HCT116 (cell line): ENCODE measurements at regions of chr12 and their contacts with region 1.

Region 1: GRCh38 chr12:131564845-131565244 is 146.0 kb upstream of the SFSWAP start:
- DNase-seq: no peak
- ATAC-seq: no peak
- H3K4me3 ChIP-seq: no peak overlapping the region
- H3K27ac ChIP-seq: no peak overlapping the region
- H3K4me1 ChIP-seq: no peaks in the 10 kb centered on the region
- H3K27me3 ChIP-seq: peaks cover 10% of the 10 kb centered on the region; the same call in 1 of the 2 replicates
- CTCF ChIP-seq: no peak
- POLR2A ChIP-seq: no peak
- RAD21 ChIP-seq: no peak

Region 2: GRCh38 chr12:131104463-131105350 is 460.1 kb before region 1 on chr12:
- CTCF ChIA-PET with region 1: no interaction called
- POLR2A ChIA-PET with region 1: no interaction called
- RAD21 ChIA-PET with region 1: no interaction called
- intact Hi-C with region 1: loop called (anchors 5 kb)
- DNase-seq: peak; percentile 64
- ATAC-seq: peak; percentile 99
- H3K4me3 ChIP-seq: no peak overlapping the region
- H3K27ac ChIP-seq: no peak overlapping the region
- H3K4me1 ChIP-seq: 0 out of 4 replicates have a peak, but pooled peaks cover 0 to 5% of the 10 kb centered on the region in 2 experiments
- H3K27me3 ChIP-seq: no peaks in the 10 kb centered on the region; the same call in 1 of the 2 replicates
- CTCF ChIP-seq: peak; percentile 89 to 96 (median 95)
- POLR2A ChIP-seq: no peak
- RAD21 ChIP-seq: peak; percentile 95